Thyroid gland (tissue), 4 donors: ENCODE measurements at regions of chr1 and their contacts with region 1.

Region 1: DNA sequence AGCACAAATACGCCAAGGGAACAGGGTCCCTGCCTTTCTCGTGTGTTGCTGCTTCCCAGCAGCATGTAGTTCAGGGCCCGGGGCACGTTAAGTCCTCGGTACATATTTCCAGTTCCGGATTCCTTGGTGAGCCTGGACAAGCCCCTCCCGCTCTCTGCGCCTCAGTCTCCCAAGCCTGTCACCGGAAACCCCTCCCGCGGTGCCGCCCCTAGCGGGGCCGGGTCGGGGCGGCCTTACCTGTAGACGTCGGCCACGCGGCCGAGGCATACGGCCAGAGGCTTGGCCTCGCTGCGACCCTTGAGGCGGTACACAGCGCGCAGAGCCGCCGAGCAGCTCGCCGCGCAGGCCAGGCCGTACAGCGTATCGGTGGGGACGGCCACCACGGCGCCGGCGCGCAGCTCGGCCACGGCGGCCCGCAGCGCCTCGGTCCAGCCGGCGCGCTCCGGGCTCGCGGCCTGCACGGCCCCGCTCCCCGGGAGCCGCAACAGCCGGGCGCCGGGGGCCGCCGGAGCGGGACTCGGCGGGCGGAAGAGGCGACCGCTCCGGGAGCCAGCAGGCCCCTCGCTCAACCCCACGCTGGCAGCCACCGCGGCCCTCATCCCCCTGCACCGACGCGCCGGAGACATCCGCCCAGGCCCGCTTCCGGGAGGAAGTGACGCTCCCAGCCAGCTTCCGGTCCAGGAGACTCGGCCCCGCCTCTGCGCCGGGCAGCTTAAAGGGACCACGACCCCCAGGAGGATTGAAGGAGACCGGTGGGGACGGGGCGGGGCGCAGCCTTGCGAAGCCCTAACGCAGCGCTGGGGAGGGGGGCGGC is at the starts of genes C1orf122 and YRDC:
- DNase-seq: peak; percentile 94 to 95
- H3K4me3 ChIP-seq: peak within 1 kb of the TSS; percentile 84 to 86 (median 85)
- H3K27ac ChIP-seq: peak within 1 kb of the TSS; percentile 80 to 97 (median 88)
- H3K4me1 ChIP-seq: peaks cover 13 to 17% of the 10 kb centered on the region in 2 donors
- H3K27me3 ChIP-seq: no peaks in the 10 kb centered on the region
- CTCF ChIP-seq: no peak
- POLR2A ChIP-seq: peak; percentile 30 to 80
- total RNA-seq, gene C1orf122: 35.4 to 164 (median 69.9) TPM
- total RNA-seq, gene YRDC: 7.1 to 15.6 (median 10.9) TPM

Region 2: DNA sequence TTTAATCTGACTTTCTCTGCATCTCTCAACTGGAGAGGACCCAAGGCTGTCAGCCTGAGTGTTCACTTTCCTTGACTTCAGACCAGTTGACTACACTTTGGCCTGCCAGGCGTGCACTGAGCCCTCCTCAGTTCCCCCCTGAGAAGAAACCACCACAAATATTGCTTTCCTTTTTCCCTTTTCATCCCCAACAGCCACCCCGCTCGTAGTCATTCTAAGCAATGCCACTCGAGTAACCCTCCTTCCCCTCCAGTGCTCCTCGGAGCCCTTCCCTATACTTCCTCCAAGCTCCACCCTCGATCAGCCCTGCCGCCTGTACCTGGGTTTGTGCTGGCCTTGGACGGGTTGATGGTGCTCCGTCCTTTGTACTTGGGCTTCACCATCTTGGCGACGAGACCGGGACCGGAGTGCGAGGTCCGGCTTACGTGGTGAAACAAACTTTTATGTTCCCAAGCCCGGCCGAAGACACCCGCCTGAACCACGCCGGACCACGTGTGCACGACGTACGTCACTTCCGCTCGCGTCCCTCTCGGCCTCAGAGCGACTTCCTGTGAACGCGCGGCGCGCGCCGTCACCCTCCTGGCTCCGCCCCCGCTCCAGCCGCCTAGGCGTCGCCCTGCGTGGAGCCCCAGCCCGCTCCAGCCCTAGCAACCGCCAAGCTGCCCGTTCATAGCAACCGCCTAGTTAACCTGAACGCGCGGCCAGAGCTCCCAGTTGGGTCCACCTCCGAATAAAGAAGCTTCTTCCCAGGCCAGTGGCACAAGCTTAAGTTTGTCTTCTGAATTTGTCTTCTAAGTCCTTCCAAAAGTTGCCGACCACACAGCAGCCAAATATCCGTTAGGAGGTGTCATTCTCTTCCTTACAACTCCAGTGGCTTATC is 212.1 kb before region 1 on chr1 and contains the start of gene GNL2:
- intact Hi-C with region 1: loop called (anchors 10 kb)
- DNase-seq: peak; percentile 97
- H3K4me3 ChIP-seq: peak within 1 kb of the TSS; percentile 49 to 67 (median 56)
- H3K27ac ChIP-seq: peak within 1 kb of the TSS in 2 of 3 donors; percentile 53 to 54
- H3K4me1 ChIP-seq: peaks cover 6 to 12% of the 10 kb centered on the region in 2 donors
- H3K27me3 ChIP-seq: no peaks in the 10 kb centered on the region
- CTCF ChIP-seq: no peak
- POLR2A ChIP-seq: peak in 1 of 2 donors; percentile 66
- total RNA-seq, gene GNL2: 27.1 to 53.8 (median 33.3) TPM

Region 3: GRCh38 chr1:37692078-37692833 is 115.5 kb before region 1 on chr1 and contains the start of gene CDCA8:
- intact Hi-C with region 1: loop called (anchors 10 kb)
- DNase-seq: peak; percentile 98
- H3K4me3 ChIP-seq: peak within 1 kb of the TSS; percentile 18 to 89 (median 56)
- H3K27ac ChIP-seq: peak within 1 kb of the TSS; percentile 42 to 78 (median 73)
- H3K4me1 ChIP-seq: peaks cover 18 to 26% of the 10 kb centered on the region in 2 donors
- H3K27me3 ChIP-seq: no peaks in the 10 kb centered on the region
- CTCF ChIP-seq: peak in 4 of 6 experiments; percentile 26 to 59 (median 48)
- POLR2A ChIP-seq: peak in 1 of 2 donors; percentile 57
- total RNA-seq, gene CDCA8: 0.33 to 1.2 (median 0.81) TPM

Region 4: GRCh38 chr1:37859507-37860345 is 52.0 kb after region 1 on chr1 and contains the start of gene MTF1:
- intact Hi-C with region 1: loop called (anchors 5 kb)
- DNase-seq: peak; percentile 97 to 98
- H3K4me3 ChIP-seq: peak within 1 kb of the TSS; percentile 57 to 93 (median 77)
- H3K27ac ChIP-seq: peak within 1 kb of the TSS; percentile 50 to 86 (median 83)
- H3K4me1 ChIP-seq: peaks cover 7 to 12% of the 10 kb centered on the region in 2 donors
- H3K27me3 ChIP-seq: no peaks in the 10 kb centered on the region
- CTCF ChIP-seq: peak; percentile 71 to 95 (median 80)
- POLR2A ChIP-seq: peak in 1 of 2 donors; percentile 88
- total RNA-seq, gene MTF1: 4.0 to 6.9 (median 5.7) TPM